Breast epithelium (tissue), 4 donors: ENCODE measurements at regions of chr19 and their contacts with region 1.

Region 1: DNA sequence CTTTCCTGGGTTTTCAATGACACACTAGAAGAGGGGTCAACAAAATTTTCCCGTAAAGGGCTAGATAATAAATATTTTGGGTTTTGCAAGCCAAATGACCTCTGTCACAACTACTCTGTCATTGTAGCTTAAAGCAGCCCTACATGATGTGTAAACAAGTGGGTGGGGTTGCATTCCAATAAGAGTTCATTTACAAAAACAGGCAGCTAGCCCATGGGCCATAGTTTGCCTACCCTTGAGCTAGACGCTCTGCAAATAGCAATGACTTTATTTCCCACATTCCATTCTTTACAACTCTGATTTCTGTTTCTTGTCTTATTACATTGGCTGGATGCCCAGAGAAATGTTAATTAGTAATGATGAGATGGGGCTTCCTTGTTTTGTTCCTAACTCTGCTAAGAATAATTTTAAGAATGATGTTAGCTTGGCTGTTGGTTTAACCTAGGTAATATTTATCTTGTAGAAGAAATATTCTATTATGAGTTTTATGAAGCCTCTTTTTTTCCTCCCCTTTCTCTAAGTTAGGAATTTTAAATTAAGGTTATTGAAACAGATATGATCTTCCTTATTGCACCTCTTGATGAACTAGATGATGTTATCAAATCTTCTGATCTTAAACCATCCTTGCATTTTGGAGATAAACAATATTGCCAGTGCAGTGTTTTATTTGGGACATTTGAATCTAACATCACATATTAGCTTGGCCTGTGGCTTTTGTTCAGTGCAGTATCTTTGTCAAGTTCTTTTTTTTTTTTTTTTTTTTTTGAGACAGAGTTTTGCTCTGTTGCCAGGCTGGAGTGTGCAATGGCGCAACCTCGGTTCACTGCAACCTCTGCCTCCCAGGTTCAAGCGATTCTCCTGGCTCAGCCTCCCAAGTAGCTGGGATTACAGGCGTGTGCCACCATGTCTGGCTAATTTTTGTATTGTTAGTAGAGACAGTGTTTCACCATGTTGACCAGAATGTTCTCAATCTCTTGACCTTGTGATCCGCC is 76.3 kb downstream of the ZNF557 start:
- DNase-seq: no peak
- H3K4me3 ChIP-seq: no peak overlapping the region
- H3K27ac ChIP-seq: no peak overlapping the region
- H3K4me1 ChIP-seq: no peaks in the 10 kb centered on the region
- H3K27me3 ChIP-seq: no peaks in the 10 kb centered on the region
- CTCF ChIP-seq: no peak
- POLR2A ChIP-seq: no peak

Region 2: GRCh38 chr19:7069042-7069903 is 76.5 kb before region 1 on chr19 and contains the start of gene ZNF557:
- intact Hi-C with region 1: no loop called
- DNase-seq: peak; percentile 97 to 99
- H3K4me3 ChIP-seq: peak within 1 kb of the TSS; percentile 83 to 97 (median 89)
- H3K27ac ChIP-seq: peak within 1 kb of the TSS; percentile 82 to 87
- H3K4me1 ChIP-seq: peaks cover 0 to 5% of the 10 kb centered on the region in 2 donors
- H3K27me3 ChIP-seq: no peaks in the 10 kb centered on the region
- CTCF ChIP-seq: no peak
- POLR2A ChIP-seq: peak; percentile 24
- total RNA-seq, gene ZNF557: 7.2 to 18.3 (median 12.8) TPM

Region 3: GRCh38 chr19:7101498-7102253 is 44.1 kb before region 1 on chr19:
- intact Hi-C with region 1: loop called (anchors 2 kb)
- DNase-seq: no peak
- H3K4me3 ChIP-seq: no peak overlapping the region
- H3K27ac ChIP-seq: no peak overlapping the region
- H3K4me1 ChIP-seq: peaks cover 0 to 4% of the 10 kb centered on the region in 2 donors
- H3K27me3 ChIP-seq: no peaks in the 10 kb centered on the region
- CTCF ChIP-seq: no peak
- POLR2A ChIP-seq: no peak

Region 4: DNA sequence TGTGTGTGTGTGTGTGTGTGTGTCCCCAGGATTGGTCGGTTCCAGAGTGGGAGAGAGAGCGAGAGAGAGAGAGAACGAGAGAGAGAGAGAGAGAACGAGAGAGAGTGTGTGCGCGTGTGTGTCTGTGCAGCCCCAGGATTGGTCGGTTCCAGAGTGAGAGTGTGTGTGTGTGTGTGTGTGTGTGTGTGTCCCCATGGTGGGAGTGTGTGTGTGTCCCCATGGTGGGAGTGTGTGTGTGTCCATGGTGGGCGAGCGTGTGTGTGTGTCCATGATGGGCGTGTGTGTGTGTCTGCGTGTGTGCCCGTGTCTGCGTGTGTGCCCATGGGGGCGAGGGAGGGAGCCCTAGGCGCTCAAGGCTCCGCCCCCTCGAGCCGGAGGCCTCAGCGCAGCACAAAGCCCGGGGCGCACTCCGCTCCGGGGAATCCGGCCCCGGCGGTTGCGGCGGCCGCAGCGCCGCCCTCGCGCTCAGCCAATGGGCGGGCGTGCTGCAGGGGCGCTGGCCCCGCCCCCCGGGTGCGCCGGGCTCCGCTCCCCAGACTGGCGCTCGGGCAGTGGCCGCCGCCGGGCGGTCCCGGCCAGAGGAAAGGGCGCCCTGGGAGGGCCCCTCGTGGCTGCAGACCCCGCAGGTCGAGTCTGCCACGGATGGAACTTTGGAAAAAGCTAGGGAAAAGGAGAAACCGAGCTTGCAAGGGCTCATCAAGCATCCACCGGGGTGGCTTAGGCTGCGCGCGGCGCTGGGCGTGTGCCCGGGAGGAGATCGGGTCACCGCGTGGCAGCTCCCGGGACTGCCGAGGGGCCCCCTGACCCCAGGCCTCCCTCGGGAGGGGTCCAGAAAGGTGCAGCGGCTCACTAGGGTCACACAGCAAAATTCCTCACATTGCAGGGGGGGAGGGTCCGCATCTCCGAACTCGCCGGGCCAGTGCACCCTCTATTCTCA is 52.2 kb after region 1 on chr19:
- intact Hi-C with region 1: loop called (anchors 10 kb)
- DNase-seq: peak; percentile 79 to 86
- H3K4me3 ChIP-seq: peak overlapping the region; percentile 58 to 75 (median 72)
- H3K27ac ChIP-seq: peak overlapping the region; percentile 88 to 96
- H3K4me1 ChIP-seq: peaks cover 0 to 5% of the 10 kb centered on the region in 2 donors
- H3K27me3 ChIP-seq: no peaks in the 10 kb centered on the region
- CTCF ChIP-seq: peak; percentile 38 to 52 (median 47)
- POLR2A ChIP-seq: peak; percentile 40